Heart right ventricle (tissue), 16 donors: ENCODE measurements at regions of chr1 and their contacts with region 1.

Region 1: GRCh38 chr1:10540277-10541005 is 65.7 kb downstream of the PEX14 start:
- DNase-seq: peak; percentile 31 to 51
- ATAC-seq: peak in 7 of 8 donors; percentile 70 to 84 (median 81)
- H3K4me3 ChIP-seq: peak overlapping the region in 1 of 10 donors; percentile 4
- H3K27ac ChIP-seq: peak overlapping the region in 9 of 10 donors; percentile 17 to 79 (median 63)
- H3K4me1 ChIP-seq: peaks cover 9 to 43% (median 29%) of the 10 kb centered on the region in 9 donors
- H3K27me3 ChIP-seq: no peaks in the 10 kb centered on the region
- CTCF ChIP-seq: no peak

Region 2: DNA sequence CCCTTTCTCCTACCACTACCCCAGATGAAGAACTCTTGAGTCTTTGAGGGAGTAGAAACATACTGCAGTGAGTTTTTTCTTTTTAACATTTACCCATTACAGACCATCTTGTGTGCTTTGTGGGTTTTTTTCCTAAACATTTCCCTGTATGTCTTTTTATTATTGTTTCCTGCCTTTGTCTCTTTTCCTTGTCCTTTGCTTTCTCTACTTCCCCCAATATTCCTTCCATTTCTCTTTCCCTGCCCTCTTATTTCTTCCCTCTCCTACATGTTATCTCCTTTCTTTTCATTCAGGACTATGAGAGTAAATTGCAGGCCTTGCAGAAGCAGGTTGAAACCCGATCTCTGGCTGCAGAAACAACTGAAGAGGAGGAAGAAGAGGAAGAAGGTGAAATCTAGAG is 220.7 kb before region 1 on chr1:
- intact Hi-C with region 1: no loop called
- DNase-seq: no peak
- ATAC-seq: no peak
- H3K4me3 ChIP-seq: no peak overlapping the region
- H3K27ac ChIP-seq: no peak overlapping the region
- H3K4me1 ChIP-seq: no peaks in the 10 kb centered on the region
- H3K27me3 ChIP-seq: no peaks in the 10 kb centered on the region
- CTCF ChIP-seq: no peak

Region 3: GRCh38 chr1:10514490-10515235 is 25.8 kb before region 1 on chr1:
- intact Hi-C with region 1: loop called in 1 of 10 experiments (anchors 2 kb)
- DNase-seq: no peak
- ATAC-seq: peak in 3 of 8 donors; percentile 42 to 53 (median 43)
- H3K4me3 ChIP-seq: no peak overlapping the region
- H3K27ac ChIP-seq: peak overlapping the region in 1 of 10 donors; percentile 55
- H3K4me1 ChIP-seq: peaks cover 3 to 73% (median 43%) of the 10 kb centered on the region in 9 donors
- H3K27me3 ChIP-seq: no peaks in the 10 kb centered on the region
- CTCF ChIP-seq: peak; percentile 28 to 66 (median 59)

Region 4: DNA sequence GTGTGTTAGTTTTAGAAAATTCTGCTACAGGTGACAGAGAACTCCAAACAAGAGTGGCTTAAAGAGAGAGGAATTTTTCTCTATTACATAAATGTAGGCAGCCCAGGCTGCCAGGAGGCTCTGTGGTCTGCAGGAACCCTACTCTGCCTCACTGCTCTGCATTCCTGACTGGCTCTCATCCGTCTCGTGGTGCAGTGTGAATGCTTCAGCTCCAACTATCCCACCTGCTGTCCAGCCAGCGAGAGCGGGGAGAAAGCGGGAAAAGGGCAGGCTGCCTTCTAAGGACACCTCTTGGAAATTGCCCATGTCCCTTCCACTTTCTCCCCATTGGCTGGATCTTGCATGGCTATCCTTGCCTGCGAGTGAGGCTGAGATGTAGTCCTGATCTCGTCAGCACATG is 65.6 kb after region 1 on chr1:
- intact Hi-C with region 1: loop called in 1 of 10 experiments (anchors 10 kb)
- DNase-seq: no peak
- ATAC-seq: no peak
- H3K4me3 ChIP-seq: no peak overlapping the region
- H3K27ac ChIP-seq: no peak overlapping the region
- H3K4me1 ChIP-seq: peaks cover 0 to 7% (median 0%) of the 10 kb centered on the region in 9 donors
- H3K27me3 ChIP-seq: no peaks in the 10 kb centered on the region
- CTCF ChIP-seq: no peak